Common myeloid progenitor, CD34-positive (primary cell): ENCODE measurements at regions of chr17 and their contacts with region 1.

Region 1: DNA sequence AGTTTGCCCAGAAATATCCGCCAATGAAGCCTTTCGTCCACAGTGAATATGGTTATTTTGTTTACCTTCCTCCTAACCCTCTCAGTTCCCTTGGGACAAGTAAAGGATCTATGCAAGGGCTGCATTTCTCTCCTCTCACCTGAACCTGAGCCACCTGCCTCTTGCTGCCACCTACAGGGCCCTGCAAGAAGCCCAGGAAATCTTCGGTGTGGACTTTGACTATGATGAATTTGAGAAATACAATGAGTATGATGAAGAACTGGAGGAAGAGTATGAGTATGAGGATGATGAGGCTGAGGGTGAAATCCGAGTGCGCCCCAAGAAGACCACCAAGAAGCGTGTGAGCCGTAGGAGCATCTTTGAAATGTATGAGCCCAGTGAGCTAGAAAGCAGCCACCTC is 14.0 kb downstream of the SUPT6H start:
- DNase-seq: peak; percentile 11 to 35 (median 32)
- H3K4me3 ChIP-seq: no peak overlapping the region
- H3K27ac ChIP-seq: no peak overlapping the region
- H3K4me1 ChIP-seq: no peaks in the 10 kb centered on the region
- H3K27me3 ChIP-seq: no peaks in the 10 kb centered on the region

Region 2: GRCh38 chr17:28371245-28372202 is 304.5 kb before region 1 on chr17 and contains the start of gene SARM1:
- CTCF ChIA-PET with region 1: no interaction called
- POLR2A ChIA-PET with region 1: no interaction called
- DNase-seq: peak; percentile 82 to 93 (median 91)
- H3K4me3 ChIP-seq: peak within 1 kb of the TSS; percentile 25 to 83 (median 61)
- H3K27ac ChIP-seq: no peak within 1 kb of the TSS
- H3K4me1 ChIP-seq: peaks cover 0 to 22% (median 12%) of the 10 kb centered on the region in 4 experiments
- H3K27me3 ChIP-seq: peaks cover 0 to 14% (median 0%) of the 10 kb centered on the region in 5 experiments

Region 3: GRCh38 chr17:28661635-28662537 is 14.1 kb before region 1 on chr17 and contains the starts of genes SDF2 and SUPT6H:
- CTCF ChIA-PET with region 1: interaction called, 21 read pairs
- POLR2A ChIA-PET with region 1: interaction called, 4 read pairs
- DNase-seq: peak; percentile 94 to 97 (median 97)
- H3K4me3 ChIP-seq: peak within 1 kb of the TSS; percentile 90 to 100 (median 96)
- H3K27ac ChIP-seq: peak within 1 kb of the TSS; percentile 99 to 100
- H3K4me1 ChIP-seq: peaks cover 7 to 23% (median 19%) of the 10 kb centered on the region in 4 experiments
- H3K27me3 ChIP-seq: no peaks in the 10 kb centered on the region